ENCODE measurements at regions of chr7 and their contacts with region 1.

Region 1: GRCh38 chr7:5494683-5495561 is 71.3 kb upstream of the TNRC18 start:
- DNase-seq: peak; percentile 82 to 92
- ATAC-seq: peak; percentile 89
- H3K4me3 ChIP-seq: peak overlapping the region in 1 of 2 donors; percentile 1
- H3K27ac ChIP-seq: peak overlapping the region in 1 of 2 donors; percentile 61
- H3K4me1 ChIP-seq: no peaks in the 10 kb centered on the region
- H3K27me3 ChIP-seq: no peaks in the 10 kb centered on the region

Region 2: GRCh38 chr7:4700577-4701235 is 794.2 kb before region 1 on chr7:
- intact Hi-C with region 1: no loop called
- DNase-seq: no peak
- ATAC-seq: peak; percentile 71
- H3K4me3 ChIP-seq: no peak overlapping the region
- H3K27ac ChIP-seq: no peak overlapping the region
- H3K4me1 ChIP-seq: no peaks in the 10 kb centered on the region
- H3K27me3 ChIP-seq: no peaks in the 10 kb centered on the region

Region 3: DNA sequence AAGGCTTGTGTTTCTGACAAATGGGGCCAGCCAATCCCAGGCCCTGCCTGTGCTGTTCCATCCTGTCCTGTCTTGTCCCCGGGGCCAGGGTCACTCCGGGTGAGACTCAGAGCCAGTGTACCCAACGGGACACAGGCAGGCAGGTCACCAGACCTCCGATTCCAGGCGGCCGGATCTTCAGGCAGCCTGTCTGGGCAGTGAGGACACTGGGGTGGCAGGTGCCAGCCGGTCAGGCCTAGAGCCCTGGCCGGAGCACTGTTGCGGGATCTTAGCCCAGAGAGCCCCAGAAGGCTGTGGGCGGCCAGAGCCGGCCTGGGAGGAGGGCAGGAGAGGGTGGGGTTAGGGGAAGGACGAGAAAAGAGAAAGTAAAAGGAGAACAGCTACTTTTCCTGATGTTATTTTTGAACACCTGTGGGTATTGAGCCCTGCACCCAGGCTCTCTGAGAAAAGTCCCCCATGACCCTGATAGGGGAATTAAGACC is 63.0 kb after region 1 on chr7:
- intact Hi-C with region 1: loop called in 1 of 2 experiments (anchors 1 kb)
- DNase-seq: peak; percentile 83 to 88
- ATAC-seq: peak; percentile 48
- H3K4me3 ChIP-seq: no peak overlapping the region
- H3K27ac ChIP-seq: peak overlapping the region; percentile 6 to 57
- H3K4me1 ChIP-seq: no peaks in the 10 kb centered on the region
- H3K27me3 ChIP-seq: no peaks in the 10 kb centered on the region

Region 4: DNA sequence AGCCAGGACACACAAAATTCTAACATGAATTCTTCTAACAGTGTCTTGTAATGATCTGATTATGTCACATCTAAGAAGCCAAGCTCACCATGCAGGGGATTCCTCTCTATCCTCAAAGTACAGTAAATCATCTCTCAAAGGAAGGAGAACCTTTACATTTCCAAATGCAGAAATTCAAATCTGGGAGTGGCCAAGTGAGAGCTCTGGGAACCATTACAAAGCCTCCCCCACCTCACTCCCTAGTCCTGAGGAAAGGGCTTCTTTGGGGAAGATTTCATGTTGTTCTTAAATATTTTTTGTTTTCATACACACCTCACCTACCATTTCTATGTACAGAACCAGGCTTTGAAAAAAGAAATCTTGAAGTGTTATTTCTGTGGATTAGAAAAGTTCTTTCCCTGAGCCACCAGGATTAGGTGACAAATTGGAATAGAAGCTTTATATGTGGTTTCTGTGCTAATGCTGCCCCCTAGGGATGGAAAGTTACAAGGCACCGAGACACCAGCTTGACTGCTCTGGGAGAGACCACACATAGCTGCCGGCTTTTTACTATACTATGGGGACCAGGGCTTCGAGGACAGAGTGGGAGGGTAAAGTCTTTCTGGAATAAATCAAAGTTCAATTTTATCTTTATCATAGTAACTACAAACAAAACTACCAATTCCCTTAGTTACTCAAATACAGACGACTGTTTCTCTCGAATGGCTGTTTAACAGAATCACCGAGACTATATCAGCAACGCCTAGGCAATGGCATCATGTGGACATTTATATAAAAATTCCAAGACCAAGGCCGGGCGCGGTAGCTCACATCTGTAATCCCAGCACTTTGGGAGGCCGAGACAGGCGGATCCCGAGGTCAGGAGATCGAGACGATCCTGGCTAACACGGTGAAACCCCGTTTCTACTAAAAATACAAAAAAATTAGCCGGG is 170.4 kb after region 1 on chr7:
- intact Hi-C with region 1: loop called (anchors 1 to 10 kb)
- DNase-seq: peak in 1 of 2 donors; percentile 70
- ATAC-seq: peak; percentile 83
- H3K4me3 ChIP-seq: no peak overlapping the region
- H3K27ac ChIP-seq: no peak overlapping the region
- H3K4me1 ChIP-seq: no peaks in the 10 kb centered on the region
- H3K27me3 ChIP-seq: no peaks in the 10 kb centered on the region

Region 5: GRCh38 chr7:5677538-5678294 is 182.8 kb after region 1 on chr7:
- intact Hi-C with region 1: loop called in 1 of 2 experiments (anchors 10 kb)
- DNase-seq: peak; percentile 79 to 81
- ATAC-seq: peak; percentile 86
- H3K4me3 ChIP-seq: no peak overlapping the region
- H3K27ac ChIP-seq: no peak overlapping the region
- H3K4me1 ChIP-seq: peaks cover 2 to 3% of the 10 kb centered on the region in 2 donors
- H3K27me3 ChIP-seq: no peaks in the 10 kb centered on the region

Region 6: GRCh38 chr7:5704534-5704922 is 209.6 kb after region 1 on chr7:
- intact Hi-C with region 1: loop called (anchors 1 to 2 kb)
- DNase-seq: peak; percentile 87 to 88
- ATAC-seq: peak; percentile 90
- H3K4me3 ChIP-seq: no peak overlapping the region
- H3K27ac ChIP-seq: no peak overlapping the region
- H3K4me1 ChIP-seq: no peaks in the 10 kb centered on the region
- H3K27me3 ChIP-seq: no peaks in the 10 kb centered on the region

Region 7: GRCh38 chr7:7002416-7003062 is 1507.6 kb after region 1 on chr7:
- intact Hi-C with region 1: no loop called
- DNase-seq: no peak
- ATAC-seq: no peak
- H3K4me3 ChIP-seq: no peak overlapping the region
- H3K27ac ChIP-seq: no peak overlapping the region
- H3K4me1 ChIP-seq: no peaks in the 10 kb centered on the region
- H3K27me3 ChIP-seq: no peaks in the 10 kb centered on the region